PC-9 (cell line): ENCODE measurements at regions of chr17 and their contacts with region 1.

Region 1: DNA sequence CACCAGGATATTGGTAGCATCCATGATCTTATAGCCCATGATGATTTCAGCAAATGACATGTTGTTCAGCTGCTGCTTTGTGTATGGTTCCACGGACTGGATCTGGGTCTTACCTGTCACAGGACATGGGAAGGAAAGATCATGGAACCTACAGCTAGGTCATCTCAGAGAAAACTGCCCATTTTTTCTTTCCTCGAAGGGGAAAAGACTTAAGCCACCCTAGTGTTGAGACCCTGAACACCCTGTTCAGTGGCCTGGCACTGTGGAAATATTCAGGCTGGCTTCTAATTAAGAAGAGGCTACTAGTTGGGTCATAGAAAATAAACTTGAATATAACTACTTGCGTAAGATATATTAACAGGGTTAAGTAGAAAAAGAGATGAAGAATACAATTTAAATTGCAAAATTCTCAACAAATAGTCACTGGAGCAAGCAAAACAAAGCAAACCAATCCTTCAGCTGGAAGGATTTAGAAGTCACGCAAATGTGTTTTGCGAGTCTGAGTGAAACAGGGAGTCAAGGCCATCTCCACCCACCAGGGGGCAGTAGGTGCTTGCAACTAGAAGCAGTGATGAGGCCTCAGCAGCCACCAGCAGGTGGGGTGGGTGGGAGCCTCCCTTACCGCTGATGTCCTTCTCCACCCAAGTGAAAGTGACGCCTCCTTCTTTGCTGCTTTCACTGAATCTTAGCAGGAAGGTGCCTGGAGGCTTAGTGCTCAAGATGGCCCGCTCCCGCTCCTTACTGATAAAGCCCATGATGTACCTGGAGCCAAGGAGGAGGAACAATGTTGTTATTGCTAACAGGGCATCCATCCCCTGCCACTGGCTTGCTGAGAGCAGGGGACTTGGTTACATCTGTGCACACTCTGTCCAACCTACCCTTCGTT is 34.3 kb downstream of the STAT5A start:
- DNase-seq: peak; percentile 84 to 87
- H3K4me3 ChIP-seq: no peak overlapping the region
- H3K27ac ChIP-seq: no peak overlapping the region
- H3K4me1 ChIP-seq: peaks cover 37% of the 10 kb centered on the region
- H3K27me3 ChIP-seq: no peaks in the 10 kb centered on the region
- CTCF ChIP-seq: peak; percentile 98

Region 2: DNA sequence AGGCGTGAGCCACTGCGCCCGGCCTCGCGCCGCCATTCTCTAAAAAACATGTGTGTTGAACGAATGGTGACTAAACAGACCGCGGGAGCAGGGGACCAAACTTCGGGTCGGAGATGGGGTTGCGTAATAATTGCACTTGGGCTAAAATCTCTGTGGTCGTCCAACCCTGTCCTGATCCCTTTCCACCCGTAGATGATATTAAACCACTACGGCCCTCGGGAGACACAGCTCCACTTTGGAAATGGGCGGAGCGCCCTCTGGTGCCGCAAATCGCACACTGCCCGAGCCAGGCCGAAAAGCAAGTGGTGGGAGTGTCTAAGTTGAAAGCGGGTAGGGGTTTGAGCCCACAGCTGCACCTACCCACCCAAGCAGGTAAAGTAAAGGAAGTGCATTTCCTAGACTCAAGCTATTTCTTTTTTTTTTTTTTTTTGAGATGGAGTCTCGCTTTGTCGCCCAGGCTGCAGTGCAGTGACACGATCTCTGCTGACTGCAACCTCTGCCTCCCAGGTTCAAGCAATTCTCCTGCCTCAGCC is 83.4 kb after region 1 on chr17:
- CTCF ChIA-PET with region 1: interaction called, 17 read pairs
- POLR2A ChIA-PET with region 1: interaction called, 4 read pairs
- intact Hi-C with region 1: loop called (anchors 1 kb)
- DNase-seq: peak in 1 of 2 experiments; percentile 45
- H3K4me3 ChIP-seq: no peak overlapping the region
- H3K27ac ChIP-seq: no peak overlapping the region
- H3K4me1 ChIP-seq: peaks cover 55% of the 10 kb centered on the region
- H3K27me3 ChIP-seq: no peaks in the 10 kb centered on the region
- CTCF ChIP-seq: peak; percentile 75

Region 3: GRCh38 chr17:42428141-42428944 is 105.7 kb after region 1 on chr17:
- CTCF ChIA-PET with region 1: interaction called, 4 read pairs
- POLR2A ChIA-PET with region 1: interaction called, 3 read pairs
- intact Hi-C with region 1: loop called (anchors 1 kb)
- DNase-seq: peak; percentile 67 to 98
- H3K4me3 ChIP-seq: no peak overlapping the region
- H3K27ac ChIP-seq: peak overlapping the region; percentile 73
- H3K4me1 ChIP-seq: peaks cover 34% of the 10 kb centered on the region
- H3K27me3 ChIP-seq: no peaks in the 10 kb centered on the region
- CTCF ChIP-seq: peak; percentile 86

Region 4: DNA sequence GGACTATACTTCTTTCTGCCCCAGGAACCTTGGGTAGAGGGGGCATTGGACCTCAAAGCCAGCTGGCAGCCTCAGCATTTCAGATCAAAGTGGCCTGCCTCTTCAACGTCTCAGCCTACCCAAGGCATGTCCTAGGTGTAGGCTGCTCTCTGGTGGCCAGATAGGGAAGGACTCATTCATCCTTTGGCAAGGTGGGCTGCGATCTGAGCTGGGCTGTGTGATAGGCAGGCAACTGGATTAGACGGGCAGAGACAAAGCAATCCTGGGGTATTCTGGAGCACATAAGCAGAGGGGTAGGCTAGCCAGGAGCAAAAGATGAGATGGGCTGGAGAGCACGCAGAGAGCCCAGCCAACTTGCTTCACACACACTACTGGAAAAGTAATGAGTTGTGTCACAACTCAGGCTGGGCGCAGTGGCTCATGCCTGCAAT is 204.7 kb after region 1 on chr17:
- CTCF ChIA-PET with region 1: interaction called, 8 read pairs
- POLR2A ChIA-PET with region 1: no interaction called
- intact Hi-C with region 1: loop called (anchors 1 kb)
- DNase-seq: peak; percentile 68 to 70
- H3K4me3 ChIP-seq: no peak overlapping the region
- H3K27ac ChIP-seq: no peak overlapping the region
- H3K4me1 ChIP-seq: peaks cover 9% of the 10 kb centered on the region
- H3K27me3 ChIP-seq: no peaks in the 10 kb centered on the region
- CTCF ChIP-seq: peak; percentile 89